ENCODE measurements at regions of chr2 and their contacts with region 1.

Region 1: GRCh38 chr2:195656859-195657633 is at the start of gene SLC39A10:
- DNase-seq: peak; percentile 97
- H3K4me3 ChIP-seq: peak within 1 kb of the TSS; percentile 83 to 93 (median 88)
- H3K27ac ChIP-seq: peak within 1 kb of the TSS; percentile 98
- H3K4me1 ChIP-seq: peaks cover 11% of the 10 kb centered on the region
- H3K27me3 ChIP-seq: no peaks in the 10 kb centered on the region
- CTCF ChIP-seq: no peak
- total RNA-seq, gene SLC39A10: 54.5 to 60.7 TPM

Region 2: DNA sequence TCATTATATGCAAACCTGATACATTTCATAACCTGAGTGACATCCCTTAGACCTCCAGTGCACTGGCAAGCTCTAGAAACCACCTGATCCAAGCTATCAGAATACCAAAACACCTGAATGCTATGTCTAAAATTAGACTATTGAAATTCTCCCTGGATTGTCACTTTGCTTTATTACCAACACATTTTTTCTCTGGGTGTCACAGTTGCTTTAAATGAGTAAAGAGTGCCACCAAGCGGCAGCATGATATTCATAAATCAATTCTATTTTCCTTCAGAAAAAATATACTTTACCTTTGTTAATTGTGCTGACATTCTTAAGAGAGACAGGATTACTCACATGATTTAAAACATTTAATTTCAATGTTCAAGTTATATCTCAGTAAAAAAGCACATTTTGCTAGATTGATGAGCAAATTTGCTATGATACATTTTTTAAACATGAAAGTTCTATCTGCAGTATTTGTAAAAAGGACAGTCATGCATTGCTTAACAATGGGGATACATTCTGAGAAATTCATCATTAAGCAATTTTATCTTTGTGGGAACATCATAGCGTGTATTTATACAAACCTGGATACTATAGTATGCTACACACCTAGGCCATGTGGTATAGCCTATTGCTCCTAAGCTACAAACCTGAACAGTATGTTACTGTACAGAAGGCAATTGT is 338.5 kb before region 1 on chr2:
- CTCF ChIA-PET with region 1: interaction called, 4 read pairs
- dilution Hi-C with region 1: no loop called
- in situ Hi-C with region 1: loop called in 1 of 2 experiments (anchors 10 kb)
- intact Hi-C with region 1: loop called (anchors 1 kb)
- DNase-seq: peak; percentile 44
- H3K4me3 ChIP-seq: peak overlapping the region in 1 of 3 experiments; percentile 13
- H3K27ac ChIP-seq: peak overlapping the region; percentile 88
- H3K4me1 ChIP-seq: peaks cover 46% of the 10 kb centered on the region
- H3K27me3 ChIP-seq: no peaks in the 10 kb centered on the region
- CTCF ChIP-seq: peak; percentile 45 to 56

Region 3: GRCh38 chr2:195498176-195498575 is 158.9 kb before region 1 on chr2:
- CTCF ChIA-PET with region 1: interaction called, 11 read pairs
- dilution Hi-C with region 1: no loop called
- in situ Hi-C with region 1: no loop called
- intact Hi-C with region 1: loop called (anchors 1 kb)
- DNase-seq: peak; percentile 26
- H3K4me3 ChIP-seq: no peak overlapping the region
- H3K27ac ChIP-seq: no peak overlapping the region
- H3K4me1 ChIP-seq: peaks cover 10% of the 10 kb centered on the region
- H3K27me3 ChIP-seq: no peaks in the 10 kb centered on the region
- CTCF ChIP-seq: peak; percentile 25 to 45

Region 4: DNA sequence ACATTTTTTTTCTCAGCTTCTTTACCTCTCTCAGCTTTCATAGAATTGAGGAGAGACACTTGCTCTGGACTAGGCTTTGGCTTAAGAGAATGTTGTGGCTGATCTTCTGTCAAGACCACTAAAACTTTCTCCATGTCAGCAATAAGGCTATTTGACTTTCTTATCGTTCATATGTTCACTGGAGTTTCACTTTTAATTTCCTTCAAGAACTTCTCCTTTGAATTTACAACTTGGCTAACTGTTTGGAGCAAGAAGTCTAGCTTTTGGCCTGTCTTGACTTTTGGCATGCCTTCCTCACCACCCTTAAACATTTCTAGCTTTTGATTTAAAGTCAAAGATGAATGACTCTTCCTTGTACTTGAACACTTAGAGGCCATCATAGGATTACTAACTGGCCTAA is 104.5 kb before region 1 on chr2:
- CTCF ChIA-PET with region 1: no interaction called
- dilution Hi-C with region 1: loop called (anchors 5 kb)
- in situ Hi-C with region 1: no loop called
- intact Hi-C with region 1: no loop called
- DNase-seq: no peak
- H3K4me3 ChIP-seq: no peak overlapping the region
- H3K27ac ChIP-seq: no peak overlapping the region
- H3K4me1 ChIP-seq: no peaks in the 10 kb centered on the region
- H3K27me3 ChIP-seq: no peaks in the 10 kb centered on the region
- CTCF ChIP-seq: no peak

Region 5: DNA sequence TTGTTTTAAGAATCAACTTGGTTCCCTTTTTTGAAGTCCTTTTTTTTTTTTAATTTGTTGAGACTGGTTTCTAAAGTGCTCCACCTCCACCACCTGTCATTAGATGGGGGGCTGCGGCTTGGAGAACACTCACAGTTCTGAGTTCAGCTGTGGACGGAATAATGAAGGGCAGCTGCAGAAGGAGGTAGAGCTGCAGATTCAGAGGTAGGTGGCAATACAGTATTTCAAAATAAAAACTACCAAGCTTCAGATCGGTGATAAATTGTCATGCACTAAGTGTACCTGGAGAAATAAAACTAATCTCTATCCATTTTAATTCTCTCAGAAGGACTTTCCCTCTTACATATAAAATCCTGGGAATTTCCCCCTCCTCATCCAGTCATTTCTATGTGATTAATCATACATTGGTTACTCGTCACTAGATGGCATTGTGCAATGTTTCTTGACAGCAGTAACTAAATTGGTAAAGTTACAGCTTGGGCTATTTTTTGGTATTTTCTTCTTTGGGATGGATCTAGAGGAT is 81.1 kb before region 1 on chr2:
- CTCF ChIA-PET with region 1: interaction called, 3 read pairs
- dilution Hi-C with region 1: no loop called
- in situ Hi-C with region 1: loop called in 1 of 2 experiments (anchors 10 kb)
- intact Hi-C with region 1: loop called (anchors 1 kb)
- DNase-seq: peak; percentile 83
- H3K4me3 ChIP-seq: no peak overlapping the region
- H3K27ac ChIP-seq: peak overlapping the region; percentile 75
- H3K4me1 ChIP-seq: peaks cover 4% of the 10 kb centered on the region
- H3K27me3 ChIP-seq: no peaks in the 10 kb centered on the region
- CTCF ChIP-seq: no peak

Region 6: DNA sequence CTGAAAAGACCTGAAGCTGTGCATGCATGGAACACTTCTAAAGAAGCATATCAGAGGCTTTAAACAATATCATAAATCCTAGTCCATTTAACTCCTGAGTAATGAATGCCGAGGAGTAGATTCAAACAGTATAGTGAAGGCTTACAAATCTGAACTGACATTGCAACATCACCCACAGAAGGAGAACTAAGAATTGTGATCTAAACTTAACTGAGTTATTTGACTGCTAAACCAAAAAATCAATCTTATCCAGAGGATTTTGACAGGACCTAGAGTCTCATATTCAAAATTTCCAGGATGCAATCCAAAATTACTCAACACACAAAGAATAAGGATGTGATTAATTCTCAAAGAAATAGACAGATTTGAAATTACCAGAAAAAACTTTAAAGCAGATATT is 181.0 kb after region 1 on chr2:
- CTCF ChIA-PET with region 1: no interaction called
- dilution Hi-C with region 1: no loop called
- in situ Hi-C with region 1: no loop called
- intact Hi-C with region 1: loop called (anchors 10 kb)
- DNase-seq: no peak
- H3K4me3 ChIP-seq: no peak overlapping the region
- H3K27ac ChIP-seq: no peak overlapping the region
- H3K4me1 ChIP-seq: no peaks in the 10 kb centered on the region
- H3K27me3 ChIP-seq: no peaks in the 10 kb centered on the region
- CTCF ChIP-seq: no peak

Region 7: GRCh38 chr2:196068271-196069209 is 411.5 kb after region 1 on chr2 and contains the start of gene DNAH7:
- CTCF ChIA-PET with region 1: no interaction called
- dilution Hi-C with region 1: no loop called
- in situ Hi-C with region 1: loop called in 1 of 2 experiments (anchors 25 kb)
- intact Hi-C with region 1: no loop called
- DNase-seq: peak; percentile 71
- H3K4me3 ChIP-seq: peak within 1 kb of the TSS; percentile 79 to 83 (median 81)
- H3K27ac ChIP-seq: peak within 1 kb of the TSS; percentile 97
- H3K4me1 ChIP-seq: peaks cover 3% of the 10 kb centered on the region
- H3K27me3 ChIP-seq: no peaks in the 10 kb centered on the region
- CTCF ChIP-seq: peak; percentile 98 to 99
- total RNA-seq, gene DNAH7: 0.56 to 1.0 TPM

Measured in mammary epithelial cell (primary cell).